ENCODE measurements at regions of chr3 and their contacts with region 1.

Region 1: GRCh38 chr3:39080026-39080425 is 27.4 kb downstream of the GORASP1 start:
- DNase-seq: no peak
- H3K4me3 Mint-ChIP-seq: no peak overlapping the region
- H3K27ac Mint-ChIP-seq: no peak overlapping the region
- H3K4me1 Mint-ChIP-seq: no peaks in the 10 kb centered on the region
- H3K27me3 Mint-ChIP-seq: no peaks in the 10 kb centered on the region
- CTCF ChIP-seq: no peak

Region 2: GRCh38 chr3:39094851-39095677 is 15.0 kb after region 1 on chr3:
- CTCF ChIA-PET with region 1: interaction called, 10 read pairs
- POLR2A ChIA-PET with region 1: no interaction called
- intact Hi-C with region 1: no loop called
- DNase-seq: no peak
- H3K4me3 Mint-ChIP-seq: no peak overlapping the region
- H3K27ac Mint-ChIP-seq: no peak overlapping the region
- H3K4me1 Mint-ChIP-seq: no peaks in the 10 kb centered on the region
- H3K27me3 Mint-ChIP-seq: no peaks in the 10 kb centered on the region
- CTCF ChIP-seq: no peak

Region 3: DNA sequence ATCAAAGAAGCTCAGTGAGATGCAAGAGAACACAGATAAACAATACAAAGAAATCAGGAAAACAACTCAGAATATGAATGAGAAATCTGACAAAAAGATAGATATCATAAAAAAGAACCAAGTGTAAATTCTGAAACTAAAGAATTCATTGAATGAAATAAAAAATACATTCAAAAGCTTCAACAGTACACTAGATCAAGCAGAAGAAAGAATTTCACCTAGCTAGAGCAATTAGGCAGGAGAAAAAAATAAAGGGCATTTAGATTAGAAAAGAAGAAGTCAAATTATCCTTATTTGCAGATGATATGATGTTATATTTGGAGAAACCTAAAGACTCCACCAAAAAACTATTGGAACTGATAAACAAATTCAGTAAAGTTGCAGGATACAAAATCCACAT is 219.3 kb after region 1 on chr3:
- CTCF ChIA-PET with region 1: no interaction called
- POLR2A ChIA-PET with region 1: no interaction called
- intact Hi-C with region 1: no loop called
- DNase-seq: no peak
- H3K4me3 Mint-ChIP-seq: no peak overlapping the region
- H3K27ac Mint-ChIP-seq: no peak overlapping the region
- H3K4me1 Mint-ChIP-seq: no peaks in the 10 kb centered on the region
- H3K27me3 Mint-ChIP-seq: peaks cover 55% of the 10 kb centered on the region
- CTCF ChIP-seq: no peak

Measured in MCF 10A (cell line).